ENCODE measurements at regions of chr6 and their contacts with region 1.

Region 1: DNA sequence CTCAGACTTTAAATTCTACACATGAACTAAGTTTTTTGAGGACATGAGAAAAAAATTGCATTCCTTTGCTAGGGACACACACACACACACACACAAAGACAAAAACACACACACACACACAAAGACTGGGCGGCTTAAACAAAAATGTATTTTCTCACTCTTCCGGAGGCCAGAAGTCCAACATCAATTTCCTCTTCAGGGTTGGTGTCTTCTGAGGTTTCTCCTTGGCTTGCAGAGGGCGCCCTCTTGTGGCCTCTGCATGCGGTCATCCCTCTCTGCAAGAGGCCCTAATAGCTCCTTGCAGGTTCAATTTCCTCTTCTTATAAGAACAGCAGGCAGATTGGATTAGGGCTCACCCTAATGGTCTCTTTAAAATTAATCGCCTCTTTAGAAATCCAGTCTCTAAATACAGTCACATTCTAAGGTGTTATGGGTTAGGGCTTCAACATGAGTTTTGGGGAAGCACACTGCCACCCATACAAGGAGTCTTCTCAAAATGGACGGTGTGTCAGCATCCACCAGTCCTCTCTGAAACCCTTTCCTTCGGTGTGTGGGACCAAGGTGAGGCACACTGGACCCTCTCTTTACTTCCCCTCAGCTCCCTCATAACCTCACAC is 61.4 kb downstream of the GPR6 start:
- DNase-seq: peak; percentile 95

Region 2: DNA sequence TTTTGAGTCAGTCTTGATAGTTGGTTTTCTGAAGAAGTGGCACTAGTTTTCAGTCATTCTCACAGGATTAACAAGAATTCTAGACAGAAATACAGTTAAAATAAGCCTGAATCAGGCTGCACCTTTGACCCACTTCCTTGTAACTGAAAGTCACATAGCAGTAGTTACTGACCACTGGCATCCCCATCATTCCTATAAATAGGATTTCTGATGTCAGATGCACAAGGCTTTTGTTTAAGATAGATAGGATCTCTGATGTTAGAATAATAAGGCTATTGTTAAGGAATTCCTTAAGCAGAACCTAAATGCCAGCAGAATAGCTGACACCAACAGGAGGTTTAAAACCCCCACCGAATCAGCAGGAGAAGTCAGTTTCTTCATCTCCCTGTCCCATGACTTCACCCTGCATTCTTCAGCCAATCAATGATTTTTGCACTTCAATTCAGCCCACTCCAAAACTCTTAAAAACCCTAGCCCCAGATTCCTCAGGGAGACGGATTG is 525.9 kb before region 1 on chr6:
- in situ Hi-C with region 1: no loop called
- DNase-seq: no peak

Region 3: DNA sequence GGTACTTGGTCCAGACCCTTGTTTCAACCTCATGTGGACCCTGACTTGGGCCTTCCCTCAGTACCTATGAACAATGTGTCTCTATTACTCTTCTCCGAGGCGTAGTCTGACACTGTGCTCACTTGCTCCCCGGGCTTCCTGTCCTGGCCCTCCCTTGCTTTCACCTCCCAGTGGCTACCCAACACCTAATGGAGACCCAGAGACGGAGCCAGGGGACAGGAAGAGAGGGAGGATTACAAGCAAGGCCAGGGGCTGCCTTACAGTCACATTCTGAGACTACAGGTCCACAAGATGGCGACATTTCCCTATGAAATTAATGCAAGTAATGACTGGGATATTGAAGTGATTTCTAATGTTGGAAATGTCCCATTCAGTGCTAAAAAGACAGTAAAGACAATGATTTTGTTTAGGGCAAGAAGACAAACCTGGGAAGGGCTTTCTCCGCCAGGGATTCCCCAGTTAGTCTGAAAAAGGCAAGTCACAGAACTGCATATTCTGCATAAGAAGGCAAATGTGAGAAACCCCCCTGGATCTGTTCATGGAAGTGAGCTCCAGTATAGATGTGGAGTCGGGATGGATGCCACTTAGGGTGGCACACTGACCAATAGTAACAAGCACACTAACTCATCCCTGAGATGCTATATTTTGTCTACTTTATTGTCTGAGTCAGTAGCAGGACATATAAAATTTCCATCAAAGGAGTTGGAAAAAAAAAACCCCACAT is 512.4 kb before region 1 on chr6:
- in situ Hi-C with region 1: loop called (anchors 25 kb)
- DNase-seq: peak; percentile 71

Region 4: DNA sequence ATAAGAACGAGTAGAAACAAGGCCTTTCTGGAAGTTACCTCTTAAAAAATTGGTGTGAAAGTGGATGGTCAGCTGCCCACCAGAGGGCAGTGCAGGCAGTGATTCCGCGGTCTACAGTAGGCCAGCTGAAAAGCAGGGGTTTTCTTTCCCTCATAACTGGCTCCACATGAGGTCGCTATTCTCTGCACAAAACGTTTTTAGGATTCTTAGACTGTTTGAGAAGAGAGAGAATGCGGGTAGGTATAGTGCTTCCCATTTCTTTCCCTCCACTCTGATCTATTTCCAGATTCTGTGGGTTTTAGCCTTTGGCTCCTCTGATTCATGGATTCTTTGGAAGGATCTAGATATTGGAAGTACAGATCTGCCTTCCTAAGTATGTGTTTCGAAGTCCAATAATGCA is 334.2 kb before region 1 on chr6:
- in situ Hi-C with region 1: loop called (anchors 25 kb)
- DNase-seq: peak; percentile 93

Region 5: GRCh38 chr6:110255211-110255755 is 215.8 kb after region 1 on chr6:
- in situ Hi-C with region 1: no loop called
- DNase-seq: peak; percentile 53